T-cell (primary cell): ENCODE measurements at regions of chr5 and their contacts with region 1.

Region 1: GRCh38 chr5:149367249-149367971 is 9.6 kb downstream of the PCYOX1L start:
- DNase-seq: peak in 29 of 35 experiments; percentile 18 to 75 (median 43)
- ATAC-seq: peak; percentile 61 to 76 (median 65)
- H3K4me3 ChIP-seq: no peak overlapping the region
- H3K4me3 Mint-ChIP-seq: no peak overlapping the region
- H3K27ac ChIP-seq: no peak overlapping the region
- H3K27ac Mint-ChIP-seq: peak overlapping the region in 1 of 2 donors; percentile 68
- H3K4me1 ChIP-seq: peaks cover 0 to 19% of the 10 kb centered on the region in 2 experiments
- H3K4me1 Mint-ChIP-seq: peaks cover 21 to 37% (median 21%) of the 10 kb centered on the region in 3 donors
- H3K27me3 ChIP-seq: no peaks in the 10 kb centered on the region
- H3K27me3 Mint-ChIP-seq: no peaks in the 10 kb centered on the region

Region 2: GRCh38 chr5:149317281-149318048 is 49.9 kb before region 1 on chr5:
- CTCF ChIA-PET with region 1: interaction called, 19 to 24 read pairs
- POLR2A ChIA-PET with region 1: no interaction called
- DNase-seq: peak in 26 of 35 experiments; percentile 14 to 77 (median 30)
- ATAC-seq: peak in 3 of 4 experiments; percentile 51 to 62 (median 59)
- H3K4me3 ChIP-seq: no peak overlapping the region
- H3K4me3 Mint-ChIP-seq: no peak overlapping the region
- H3K27ac ChIP-seq: no peak overlapping the region
- H3K27ac Mint-ChIP-seq: no peak overlapping the region
- H3K4me1 ChIP-seq: peaks cover 0 to 3% of the 10 kb centered on the region in 2 experiments
- H3K4me1 Mint-ChIP-seq: peaks cover 0 to 3% (median 3%) of the 10 kb centered on the region in 3 donors
- H3K27me3 ChIP-seq: no peaks in the 10 kb centered on the region
- H3K27me3 Mint-ChIP-seq: no peaks in the 10 kb centered on the region

Region 3: DNA sequence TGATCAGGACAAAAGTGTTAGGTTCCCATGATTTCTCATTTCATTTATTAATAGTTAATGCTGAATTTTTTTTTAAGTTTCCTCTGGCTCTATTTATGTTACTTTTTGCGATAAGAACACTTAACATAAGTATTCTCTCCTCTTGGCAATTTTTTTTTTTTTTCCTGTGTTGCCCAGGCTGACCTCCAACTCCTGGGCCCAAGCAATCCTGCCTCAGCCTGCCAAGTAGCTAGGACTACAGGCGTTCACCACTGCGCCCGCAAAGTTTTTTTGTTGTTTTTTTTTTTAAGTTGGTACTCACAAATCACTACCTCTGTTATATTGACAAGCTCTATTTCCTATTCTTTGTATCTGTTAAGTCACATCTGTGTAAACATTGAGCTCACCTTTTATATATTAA is 15.2 kb before region 1 on chr5:
- CTCF ChIA-PET with region 1: interaction called, 5 to 18 read pairs
- POLR2A ChIA-PET with region 1: no interaction called
- DNase-seq: no peak
- ATAC-seq: no peak
- H3K4me3 ChIP-seq: no peak overlapping the region
- H3K4me3 Mint-ChIP-seq: peak overlapping the region in 1 of 3 donors; percentile 39
- H3K27ac ChIP-seq: no peak overlapping the region
- H3K27ac Mint-ChIP-seq: peak overlapping the region; percentile 66 to 79
- H3K4me1 ChIP-seq: peaks cover 26 to 39% of the 10 kb centered on the region in 2 experiments
- H3K4me1 Mint-ChIP-seq: peaks cover 68 to 87% (median 85%) of the 10 kb centered on the region in 3 donors
- H3K27me3 ChIP-seq: no peaks in the 10 kb centered on the region
- H3K27me3 Mint-ChIP-seq: no peaks in the 10 kb centered on the region